ENCODE measurements at regions of chr6 and their contacts with region 1.

Region 1: DNA sequence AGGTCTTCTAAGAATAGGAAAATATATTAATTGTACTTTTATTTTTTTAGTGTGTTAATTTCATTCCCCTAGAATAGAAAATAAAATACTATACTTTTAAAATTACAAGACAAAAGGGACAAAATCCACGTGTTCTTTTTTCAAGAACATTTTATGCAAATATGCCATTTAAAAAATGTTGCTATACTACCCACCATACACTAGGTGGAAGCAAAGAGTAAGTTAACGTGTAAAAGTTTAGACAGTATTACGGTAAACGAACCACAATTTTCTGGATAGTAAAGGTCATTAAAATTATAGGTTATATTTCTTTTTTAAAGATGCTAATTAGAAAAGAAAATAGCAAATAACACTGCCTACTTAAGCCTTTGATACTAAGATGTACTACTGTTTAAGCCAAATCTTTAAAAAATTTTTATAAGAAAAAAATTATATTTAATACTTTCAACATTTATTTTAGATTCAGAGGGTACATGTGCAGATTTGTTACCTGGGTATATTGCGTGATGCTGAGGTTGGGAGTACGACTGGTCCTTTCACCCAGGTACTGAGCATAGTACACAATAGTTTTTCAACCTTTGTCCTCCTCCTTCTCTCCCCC is 287.6 kb downstream of the PHF3 start:
- DNase-seq: no peak
- H3K4me3 Mint-ChIP-seq: no peak overlapping the region
- H3K27ac Mint-ChIP-seq: no peak overlapping the region
- H3K4me1 Mint-ChIP-seq: no peaks in the 10 kb centered on the region
- H3K27me3 Mint-ChIP-seq: peaks cover 7% of the 10 kb centered on the region

Region 2: DNA sequence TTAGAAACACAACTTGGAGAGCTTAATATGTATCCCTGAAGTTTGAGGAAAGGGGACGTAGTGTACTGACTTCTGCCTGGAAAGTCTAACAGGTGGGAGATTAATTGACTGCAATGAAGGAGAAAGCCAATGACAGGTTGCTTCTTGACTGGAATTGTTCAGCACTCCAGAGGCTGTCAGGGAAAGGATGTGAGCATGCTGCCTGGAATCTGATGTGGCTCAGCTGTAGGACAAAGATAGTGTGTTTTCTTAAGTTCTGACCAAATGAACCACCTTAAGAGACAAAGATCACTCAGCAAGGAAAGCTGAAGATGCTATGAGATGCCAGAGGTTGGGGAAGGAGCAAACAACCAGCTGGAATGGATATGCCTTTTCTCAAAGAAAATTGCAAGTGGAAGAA is 101.8 kb before region 1 on chr6:
- CTCF ChIA-PET with region 1: no interaction called
- intact Hi-C with region 1: no loop called
- DNase-seq: no peak
- H3K4me3 Mint-ChIP-seq: no peak overlapping the region
- H3K27ac Mint-ChIP-seq: no peak overlapping the region
- H3K4me1 Mint-ChIP-seq: no peaks in the 10 kb centered on the region
- H3K27me3 Mint-ChIP-seq: peaks cover 3% of the 10 kb centered on the region

Region 3: GRCh38 chr6:64330694-64331307 is 407.6 kb after region 1 on chr6:
- CTCF ChIA-PET with region 1: no interaction called
- intact Hi-C with region 1: loop called (anchors 1 kb)
- DNase-seq: peak; percentile 64
- H3K4me3 Mint-ChIP-seq: no peak overlapping the region
- H3K27ac Mint-ChIP-seq: no peak overlapping the region
- H3K4me1 Mint-ChIP-seq: no peaks in the 10 kb centered on the region
- H3K27me3 Mint-ChIP-seq: no peaks in the 10 kb centered on the region